ENCODE measurements at regions of chr3 and their contacts with region 1.

Region 1: GRCh38 chr3:13040361-13041074 is 32.7 kb downstream of the IQSEC1 start:
- DNase-seq: no peak
- ATAC-seq: peak; percentile 99
- H3K4me3 ChIP-seq: no peak overlapping the region
- H3K27ac ChIP-seq: no peak overlapping the region
- H3K4me1 ChIP-seq: peaks cover 23% of the 10 kb centered on the region
- H3K27me3 ChIP-seq: no peaks in the 10 kb centered on the region
- CTCF ChIP-seq: no peak
- EP300 ChIP-seq: no peak
- POLR2A ChIP-seq: no peak
- RAD21 ChIP-seq: no peak

Region 2: GRCh38 chr3:12868039-12869034 is 172.2 kb before region 1 on chr3:
- CTCF ChIA-PET with region 1: no interaction called
- POLR2A ChIA-PET with region 1: no interaction called
- RAD21 ChIA-PET with region 1: no interaction called
- SMC1A ChIA-PET with region 1: no interaction called
- in situ Hi-C with region 1: no loop called
- intact Hi-C with region 1: no loop called
- DNase-seq: no peak
- ATAC-seq: peak; percentile 82
- H3K4me3 ChIP-seq: no peak overlapping the region
- H3K27ac ChIP-seq: no peak overlapping the region
- H3K4me1 ChIP-seq: peaks cover 28% of the 10 kb centered on the region
- H3K27me3 ChIP-seq: no peaks in the 10 kb centered on the region; a peak in 1 of 4 replicates
- CTCF ChIP-seq: peak; percentile 86 to 94 (median 90)
- EP300 ChIP-seq: no peak
- POLR2A ChIP-seq: no peak
- RAD21 ChIP-seq: peak; percentile 85

Region 3: DNA sequence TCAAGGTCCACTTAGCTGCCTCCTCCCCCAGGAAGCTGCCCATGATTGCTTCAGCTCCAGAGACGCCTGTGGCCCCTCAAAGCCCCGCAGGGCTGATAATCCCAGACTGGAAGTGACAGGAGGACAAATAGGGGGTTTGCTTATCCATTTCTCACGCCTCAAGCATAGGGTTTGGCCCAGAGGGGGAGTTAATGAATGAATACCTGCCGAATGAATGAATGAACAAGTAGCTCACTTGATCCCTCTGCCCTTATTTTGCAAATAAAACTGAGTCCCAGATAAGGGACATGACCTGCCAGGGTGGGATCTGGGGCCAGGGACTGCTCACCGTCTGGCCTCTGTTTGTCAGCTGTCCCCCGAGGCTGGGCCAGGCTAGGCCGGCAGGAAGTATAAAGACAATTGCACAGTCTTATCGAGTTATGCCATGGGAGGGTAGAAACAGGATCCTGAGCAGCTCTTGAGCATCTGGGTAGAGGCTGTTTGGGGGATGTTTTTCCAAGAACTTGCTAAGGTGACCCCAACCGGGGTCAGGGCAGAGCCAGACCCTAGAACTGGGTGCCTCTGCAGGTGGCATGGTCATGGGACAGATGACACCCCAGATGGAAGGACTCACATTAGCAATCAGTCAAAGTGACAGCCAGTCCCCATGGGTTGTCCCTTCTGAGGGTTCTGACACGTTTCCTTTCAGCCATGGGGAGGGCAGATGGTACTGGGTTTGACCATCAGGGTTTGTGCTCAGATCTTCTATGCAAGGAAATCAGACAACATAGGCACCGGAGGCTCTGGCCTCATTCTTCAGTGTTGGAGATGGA is 12.3 kb before region 1 on chr3:
- CTCF ChIA-PET with region 1: interaction called, 21 read pairs
- POLR2A ChIA-PET with region 1: interaction called, 58 read pairs
- RAD21 ChIA-PET with region 1: interaction called, 22 read pairs
- SMC1A ChIA-PET with region 1: interaction called, 34 read pairs
- in situ Hi-C with region 1: no loop called
- intact Hi-C with region 1: no loop called
- DNase-seq: no peak
- ATAC-seq: no peak
- H3K4me3 ChIP-seq: no peak overlapping the region
- H3K27ac ChIP-seq: no peak overlapping the region
- H3K4me1 ChIP-seq: no peaks in the 10 kb centered on the region; the same call in 1 of the 2 replicates
- H3K27me3 ChIP-seq: no peaks in the 10 kb centered on the region
- CTCF ChIP-seq: no peak
- EP300 ChIP-seq: no peak
- POLR2A ChIP-seq: no peak
- RAD21 ChIP-seq: no peak

Region 4: GRCh38 chr3:13229273-13229949 is 188.9 kb after region 1 on chr3:
- CTCF ChIA-PET with region 1: no interaction called
- POLR2A ChIA-PET with region 1: no interaction called
- RAD21 ChIA-PET with region 1: no interaction called
- SMC1A ChIA-PET with region 1: no interaction called
- in situ Hi-C with region 1: no loop called
- intact Hi-C with region 1: no loop called
- DNase-seq: peak; percentile 2
- ATAC-seq: peak; percentile 93
- H3K4me3 ChIP-seq: no peak overlapping the region
- H3K27ac ChIP-seq: no peak overlapping the region
- H3K4me1 ChIP-seq: no peaks in the 10 kb centered on the region; the same call in 1 of the 2 replicates
- H3K27me3 ChIP-seq: no peaks in the 10 kb centered on the region
- CTCF ChIP-seq: peak; percentile 53 to 60 (median 59)
- EP300 ChIP-seq: no peak
- POLR2A ChIP-seq: no peak
- RAD21 ChIP-seq: peak; percentile 42; the same call in 1 of the 2 replicates

Region 5: GRCh38 chr3:13288732-13289718 is 248.5 kb after region 1 on chr3:
- CTCF ChIA-PET with region 1: no interaction called
- POLR2A ChIA-PET with region 1: no interaction called
- RAD21 ChIA-PET with region 1: no interaction called
- SMC1A ChIA-PET with region 1: no interaction called
- in situ Hi-C with region 1: no loop called
- intact Hi-C with region 1: no loop called
- DNase-seq: no peak
- ATAC-seq: no peak
- H3K4me3 ChIP-seq: no peak overlapping the region
- H3K27ac ChIP-seq: no peak overlapping the region
- H3K4me1 ChIP-seq: no peaks in the 10 kb centered on the region
- H3K27me3 ChIP-seq: peaks cover 1 to 2% of the 10 kb centered on the region in 2 experiments; a peak in 2 of 4 replicates
- CTCF ChIP-seq: no peak
- EP300 ChIP-seq: no peak
- POLR2A ChIP-seq: no peak
- RAD21 ChIP-seq: no peak